ENCODE measurements at regions of chr3 and their contacts with region 1.

Region 1: DNA sequence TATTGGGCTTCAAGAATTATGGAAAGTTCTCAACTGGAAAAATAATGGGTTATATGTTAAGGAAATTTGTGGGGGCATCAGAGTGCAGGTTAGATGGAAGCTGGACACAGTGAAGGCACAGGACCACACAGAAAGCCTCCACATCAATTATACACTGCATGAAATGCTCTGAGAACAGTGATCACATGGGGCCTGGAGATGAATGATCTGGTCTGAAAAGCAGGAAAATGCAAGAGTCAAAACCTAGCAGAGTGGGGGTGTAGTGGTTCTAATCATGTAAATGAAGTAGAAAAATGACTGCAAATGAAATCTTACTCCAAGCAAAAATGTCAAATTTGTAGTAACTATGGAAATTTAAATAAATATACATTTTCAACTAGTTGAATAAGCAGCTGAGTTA is 123.6 kb downstream of the TUSC7 start:
- DNase-seq: no peak
- CTCF ChIP-seq: no peak

Region 2: GRCh38 chr3:116849261-116849688 is 16.1 kb after region 1 on chr3:
- CTCF ChIA-PET with region 1: interaction called, 12 read pairs
- POLR2A ChIA-PET with region 1: no interaction called
- DNase-seq: no peak
- CTCF ChIP-seq: no peak